ENCODE measurements at regions of chr14 and their contacts with region 1.

Region 1: DNA sequence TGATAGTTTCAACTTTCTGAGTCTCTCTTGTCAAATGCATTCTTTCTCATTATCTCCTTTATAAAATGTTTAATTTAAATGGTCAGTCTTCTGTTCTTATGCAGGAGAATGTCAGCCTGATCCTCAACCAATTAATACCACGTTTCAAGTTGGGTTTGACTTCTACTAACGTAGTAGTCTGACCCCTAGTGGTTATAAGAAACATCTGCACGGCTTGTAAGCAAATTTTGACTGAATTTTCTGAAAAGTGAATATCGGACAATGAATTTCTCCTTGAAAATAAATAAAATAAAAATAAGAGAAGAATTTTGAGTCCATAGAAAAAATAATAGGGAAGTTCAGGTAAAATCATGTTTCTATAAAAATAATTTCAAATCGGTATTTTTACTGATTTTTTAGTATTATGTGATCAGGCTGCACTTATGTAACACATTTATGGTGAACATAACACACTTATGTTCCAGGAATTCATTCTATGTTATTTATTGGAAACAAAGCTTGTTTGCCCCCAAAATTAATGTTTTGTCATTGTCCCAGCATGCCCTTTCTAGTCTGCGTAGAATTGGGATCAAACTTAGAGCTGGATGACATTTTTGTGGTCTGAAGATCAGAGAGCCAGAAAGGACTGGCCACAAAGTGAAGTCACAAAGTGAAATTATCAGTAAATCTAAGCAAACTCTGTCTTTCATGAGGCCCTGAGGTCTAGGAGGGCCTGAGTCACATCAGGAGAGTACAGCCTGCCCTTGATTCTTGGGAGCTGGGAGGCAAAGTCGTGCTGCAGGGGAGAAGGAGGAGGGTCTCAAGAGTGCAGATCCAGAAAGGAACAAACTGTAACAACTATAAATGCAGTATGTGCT is 101.2 kb upstream of the STXBP6 start:
- DNase-seq: no peak
- ATAC-seq: no peak
- H3K4me3 ChIP-seq: no peak overlapping the region
- H3K27ac ChIP-seq: no peak overlapping the region
- H3K4me1 ChIP-seq: no peaks in the 10 kb centered on the region
- H3K27me3 ChIP-seq: peaks cover 0 to 1% of the 10 kb centered on the region in 2 donors

Region 2: GRCh38 chr14:24710403-24711112 is 440.6 kb before region 1 on chr14:
- intact Hi-C with region 1: loop called in 1 of 2 experiments (anchors 5 kb)
- DNase-seq: peak in 1 of 2 donors; percentile 55
- ATAC-seq: peak; percentile 76
- H3K4me3 ChIP-seq: no peak overlapping the region
- H3K27ac ChIP-seq: no peak overlapping the region
- H3K4me1 ChIP-seq: no peaks in the 10 kb centered on the region
- H3K27me3 ChIP-seq: no peaks in the 10 kb centered on the region

Region 3: GRCh38 chr14:24806061-24806678 is 345.0 kb before region 1 on chr14:
- intact Hi-C with region 1: loop called (anchors 2 to 5 kb)
- DNase-seq: peak; percentile 70 to 79
- ATAC-seq: no peak
- H3K4me3 ChIP-seq: no peak overlapping the region
- H3K27ac ChIP-seq: no peak overlapping the region
- H3K4me1 ChIP-seq: no peaks in the 10 kb centered on the region
- H3K27me3 ChIP-seq: no peaks in the 10 kb centered on the region

Region 4: GRCh38 chr14:25042362-25043299 is 108.5 kb before region 1 on chr14:
- intact Hi-C with region 1: no loop called
- DNase-seq: no peak
- ATAC-seq: no peak
- H3K4me3 ChIP-seq: no peak overlapping the region
- H3K27ac ChIP-seq: no peak overlapping the region
- H3K4me1 ChIP-seq: no peaks in the 10 kb centered on the region
- H3K27me3 ChIP-seq: no peaks in the 10 kb centered on the region

Region 5: GRCh38 chr14:25090716-25091454 is 60.3 kb before region 1 on chr14:
- intact Hi-C with region 1: no loop called
- DNase-seq: no peak
- ATAC-seq: no peak
- H3K4me3 ChIP-seq: no peak overlapping the region
- H3K27ac ChIP-seq: peak overlapping the region in 1 of 2 donors; percentile 69
- H3K4me1 ChIP-seq: no peaks in the 10 kb centered on the region
- H3K27me3 ChIP-seq: no peaks in the 10 kb centered on the region